Lower leg skin (tissue), 4 donors: ENCODE measurements at regions of chrX and their contacts with region 1.

Region 1: DNA sequence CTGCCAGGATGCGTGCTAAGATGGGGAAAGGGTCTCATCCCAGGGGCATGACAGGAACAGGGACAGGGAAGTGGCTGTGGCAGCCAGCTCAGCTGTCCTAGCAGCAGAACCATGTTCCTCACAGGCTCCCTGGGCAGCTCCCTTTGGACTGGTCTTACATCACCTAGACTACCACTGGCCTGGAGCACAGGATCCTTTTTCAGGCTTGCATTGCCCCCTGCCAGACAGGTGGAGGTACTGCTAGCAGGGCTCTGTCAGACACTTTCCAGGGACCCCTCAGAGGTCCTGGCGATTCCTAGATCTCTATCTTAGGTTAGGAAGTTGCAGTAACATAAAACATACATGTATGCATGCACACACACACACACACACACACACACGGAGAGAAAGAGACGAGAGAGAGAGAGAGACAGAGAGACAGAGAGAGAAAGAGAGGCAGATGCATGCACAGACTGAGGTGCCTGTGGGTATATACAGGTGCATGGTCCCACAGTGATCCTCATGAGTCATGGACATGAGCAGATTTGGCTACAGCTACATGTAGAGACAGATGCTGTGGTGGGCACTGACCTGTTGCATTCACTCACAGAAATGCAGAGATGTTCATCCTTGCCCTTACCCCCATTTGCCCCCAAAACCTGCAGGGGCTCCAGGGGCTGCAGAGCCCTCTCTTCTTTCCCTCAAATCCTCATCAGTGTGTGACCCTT is 63.6 kb downstream of the STARD8 start:
- DNase-seq: no peak
- H3K4me3 ChIP-seq: no peak overlapping the region
- CTCF ChIP-seq: no peak
- POLR2A ChIP-seq: no peak

Region 2: GRCh38 chrX:68060506-68061205 is 650.4 kb before region 1 on chrX:
- intact Hi-C with region 1: no loop called
- DNase-seq: no peak
- H3K4me3 ChIP-seq: no peak overlapping the region
- CTCF ChIP-seq: no peak
- POLR2A ChIP-seq: no peak

Region 3: DNA sequence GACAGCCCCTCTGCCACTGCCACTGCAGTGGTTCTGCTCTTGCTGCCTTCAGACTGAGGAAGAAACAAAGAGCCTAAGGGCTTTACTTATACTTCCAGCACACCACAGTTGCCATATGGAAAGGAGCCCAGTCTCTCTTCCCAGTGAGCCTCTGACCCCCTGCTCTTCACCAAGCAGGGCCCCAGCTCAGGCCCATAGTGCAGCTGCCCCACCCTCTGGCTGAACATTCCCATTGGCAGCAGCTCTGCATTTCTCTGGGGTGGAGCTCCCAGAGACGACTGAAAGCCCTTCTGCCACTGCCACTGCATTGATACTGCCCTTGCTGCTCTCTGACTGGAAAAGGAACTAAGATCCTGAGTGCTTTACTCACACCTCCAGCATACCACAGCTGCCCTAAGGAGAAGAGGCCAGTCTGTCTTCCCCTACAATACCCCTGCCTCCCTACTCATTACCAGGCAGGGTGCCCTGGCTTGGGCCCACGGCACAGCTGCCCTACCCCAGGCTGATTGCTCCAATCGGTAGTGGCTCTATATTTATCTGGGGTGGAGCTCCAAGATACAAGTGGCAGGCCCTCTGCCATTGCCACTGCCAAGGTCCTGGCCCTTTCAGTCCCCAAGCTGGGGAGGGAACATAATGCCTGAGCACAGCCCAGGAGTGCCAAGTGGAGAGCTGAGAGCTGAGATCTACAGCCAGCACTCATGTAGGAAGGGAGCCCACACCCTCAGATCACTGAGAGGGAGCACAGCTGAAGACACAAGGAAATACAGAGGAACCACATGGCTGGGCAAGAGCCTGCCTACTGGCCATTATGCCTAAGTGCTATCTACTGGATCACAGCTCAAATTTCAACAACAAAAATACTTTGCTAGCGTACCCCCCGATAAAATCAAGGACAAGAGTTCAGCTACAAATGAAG is 1302.7 kb after region 1 on chrX:
- intact Hi-C with region 1: loop called (anchors 5 kb)
- DNase-seq: no peak
- H3K4me3 ChIP-seq: no peak overlapping the region
- CTCF ChIP-seq: no peak
- POLR2A ChIP-seq: no peak